ENCODE measurements at regions of chr19 and their contacts with region 1.

Region 1: GRCh38 chr19:46529622-46530462 is 34.2 kb upstream of the PNMA8B start:
- DNase-seq: no peak
- ATAC-seq: peak; percentile 86
- H3K4me3 ChIP-seq: no peak overlapping the region
- H3K27ac ChIP-seq: no peak overlapping the region
- H3K4me1 ChIP-seq: peaks cover 4% of the 10 kb centered on the region
- H3K27me3 ChIP-seq: no peaks in the 10 kb centered on the region; a peak in 1 of 4 replicates
- CTCF ChIP-seq: peak; percentile 87 to 94 (median 90)
- EP300 ChIP-seq: no peak
- POLR2A ChIP-seq: no peak
- RAD21 ChIP-seq: peak; percentile 94

Region 2: GRCh38 chr19:46147791-46148288 is 382.0 kb before region 1 on chr19 and contains the start of gene IGFL2:
- CTCF ChIA-PET with region 1: no interaction called
- POLR2A ChIA-PET with region 1: no interaction called
- RAD21 ChIA-PET with region 1: no interaction called
- SMC1A ChIA-PET with region 1: no interaction called
- in situ Hi-C with region 1: no loop called
- intact Hi-C with region 1: no loop called
- DNase-seq: no peak
- ATAC-seq: no peak
- H3K4me3 ChIP-seq: no peak within 1 kb of the TSS
- H3K27ac ChIP-seq: no peak within 1 kb of the TSS
- H3K4me1 ChIP-seq: no peaks in the 10 kb centered on the region
- H3K27me3 ChIP-seq: peaks cover 0 to 4% of the 10 kb centered on the region in 2 experiments; a peak in 1 of 4 replicates
- CTCF ChIP-seq: no peak
- EP300 ChIP-seq: no peak
- POLR2A ChIP-seq: no peak
- RAD21 ChIP-seq: no peak
- polyA plus RNA-seq, gene IGFL2: not detected

Region 3: GRCh38 chr19:46542428-46543230 is 12.8 kb after region 1 on chr19:
- CTCF ChIA-PET with region 1: interaction called, 31 read pairs
- POLR2A ChIA-PET with region 1: no interaction called
- RAD21 ChIA-PET with region 1: no interaction called
- SMC1A ChIA-PET with region 1: interaction called, 3 read pairs
- in situ Hi-C with region 1: no loop called
- intact Hi-C with region 1: no loop called
- DNase-seq: no peak
- ATAC-seq: peak; percentile 81
- H3K4me3 ChIP-seq: no peak overlapping the region
- H3K27ac ChIP-seq: no peak overlapping the region
- H3K4me1 ChIP-seq: no peaks in the 10 kb centered on the region
- H3K27me3 ChIP-seq: no peaks in the 10 kb centered on the region; a peak in 2 of 4 replicates
- CTCF ChIP-seq: peak; percentile 75 to 77 (median 77)
- EP300 ChIP-seq: no peak
- POLR2A ChIP-seq: no peak
- RAD21 ChIP-seq: peak; percentile 64

Region 4: DNA sequence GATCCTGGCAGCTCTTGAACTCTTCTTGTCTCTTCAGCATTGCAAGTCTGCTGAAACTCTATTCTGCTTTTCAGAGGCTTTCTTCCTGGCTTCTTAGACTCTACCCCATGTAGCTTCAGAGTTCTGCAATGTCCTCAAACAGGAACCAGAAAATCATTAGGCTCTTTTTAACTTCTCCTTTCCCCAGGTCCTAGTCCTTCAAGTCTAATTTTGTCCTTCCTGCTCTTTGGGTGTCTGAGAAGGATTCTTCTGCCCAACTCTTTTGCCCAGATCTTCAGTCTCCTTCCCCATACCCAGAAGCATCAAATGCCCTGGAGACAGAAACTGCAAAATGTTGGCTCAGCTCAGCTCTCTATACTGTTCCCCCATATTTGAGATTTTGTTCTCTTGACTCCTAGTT is 21.3 kb after region 1 on chr19:
- CTCF ChIA-PET with region 1: interaction called, 12 read pairs
- POLR2A ChIA-PET with region 1: no interaction called
- RAD21 ChIA-PET with region 1: no interaction called
- SMC1A ChIA-PET with region 1: no interaction called
- in situ Hi-C with region 1: no loop called
- intact Hi-C with region 1: no loop called
- DNase-seq: no peak
- ATAC-seq: no peak
- H3K4me3 ChIP-seq: no peak overlapping the region
- H3K27ac ChIP-seq: no peak overlapping the region
- H3K4me1 ChIP-seq: no peaks in the 10 kb centered on the region
- H3K27me3 ChIP-seq: no peaks in the 10 kb centered on the region
- CTCF ChIP-seq: no peak
- EP300 ChIP-seq: no peak
- POLR2A ChIP-seq: no peak
- RAD21 ChIP-seq: no peak

Region 5: DNA sequence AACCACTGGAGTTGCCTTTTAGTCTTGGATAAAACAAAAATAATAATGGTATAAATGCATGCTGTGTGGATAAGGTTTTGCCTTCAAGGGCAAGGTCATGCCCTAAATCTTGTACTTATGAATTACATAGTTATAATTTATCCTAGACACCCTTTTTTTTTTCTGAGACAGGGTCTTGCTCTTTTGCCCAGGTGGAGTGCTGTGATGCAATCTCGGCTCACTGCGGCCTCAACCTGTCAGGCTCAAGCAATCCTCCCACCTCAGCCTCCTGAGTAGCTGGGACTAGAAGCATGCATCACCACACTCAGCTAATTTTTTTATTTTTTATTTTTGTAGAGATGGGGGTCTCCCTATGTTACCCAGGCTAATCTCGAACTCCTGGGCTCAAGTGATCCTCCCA is 138.8 kb after region 1 on chr19:
- CTCF ChIA-PET with region 1: interaction called, 3 read pairs
- POLR2A ChIA-PET with region 1: no interaction called
- RAD21 ChIA-PET with region 1: no interaction called
- SMC1A ChIA-PET with region 1: no interaction called
- in situ Hi-C with region 1: loop called (anchors 5 kb)
- intact Hi-C with region 1: no loop called
- DNase-seq: no peak
- ATAC-seq: no peak
- H3K4me3 ChIP-seq: no peak overlapping the region
- H3K27ac ChIP-seq: no peak overlapping the region
- H3K4me1 ChIP-seq: no peaks in the 10 kb centered on the region
- H3K27me3 ChIP-seq: no peaks in the 10 kb centered on the region
- CTCF ChIP-seq: no peak
- EP300 ChIP-seq: no peak
- POLR2A ChIP-seq: no peak
- RAD21 ChIP-seq: no peak